ENCODE measurements at regions of chr6 and their contacts with region 1.

Region 1: DNA sequence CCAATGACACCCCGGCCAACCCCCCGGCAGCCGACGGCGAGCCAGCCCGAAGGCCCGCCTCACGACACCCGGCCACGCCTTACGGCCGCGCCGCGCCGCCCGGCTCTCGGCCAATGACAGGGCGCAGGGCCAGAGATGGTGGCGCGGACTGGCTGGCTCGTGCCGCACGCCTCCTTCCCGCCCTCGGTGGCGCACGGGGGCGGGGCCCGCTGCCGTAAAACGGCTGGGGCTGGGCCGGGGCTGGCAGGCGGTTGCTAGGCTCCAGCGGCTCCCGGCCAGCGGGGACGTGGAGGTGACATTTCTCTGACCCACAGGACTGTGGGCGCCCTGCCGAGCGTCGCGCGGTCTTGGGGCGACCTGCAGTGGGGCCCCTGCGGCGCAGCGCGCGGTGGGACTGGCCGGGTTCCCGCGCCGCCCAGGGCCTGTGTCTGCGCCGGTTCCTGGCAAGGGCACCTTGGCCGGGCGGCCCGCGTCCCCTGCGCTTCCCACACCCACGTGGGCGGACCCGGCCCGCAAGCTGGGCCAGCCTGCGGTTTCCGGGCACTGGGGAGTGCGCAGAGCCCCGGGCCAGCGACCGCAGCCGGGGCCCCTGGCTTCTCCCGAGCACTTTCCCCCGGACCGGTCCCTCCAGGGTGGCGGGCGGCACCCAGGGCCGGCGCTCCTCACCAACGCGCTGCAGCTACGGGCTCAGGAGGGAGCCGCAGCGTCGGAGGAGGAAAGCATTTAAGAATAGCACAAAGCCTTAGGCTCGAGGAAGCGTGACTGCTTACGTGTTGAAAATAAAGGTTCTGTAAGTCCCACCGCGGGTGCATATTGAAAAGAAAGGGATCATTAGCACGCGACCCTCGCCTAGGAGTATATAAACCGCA is at the start of gene MPC1:
- DNase-seq: peak; percentile 75
- H3K4me3 ChIP-seq: peak within 1 kb of the TSS; percentile 68 to 91 (median 80)
- H3K27ac ChIP-seq: peak within 1 kb of the TSS; percentile 90 to 96 (median 92)
- H3K4me1 ChIP-seq: peaks cover 4 to 16% (median 10%) of the 10 kb centered on the region in 3 donors
- H3K27me3 ChIP-seq: no peaks in the 10 kb centered on the region
- CTCF ChIP-seq: no peak
- POLR2A ChIP-seq: peak in 3 of 4 donors; percentile 30 to 83 (median 71)
- total RNA-seq, gene MPC1: 43.1 to 64.3 (median 59.5) TPM

Region 2: DNA sequence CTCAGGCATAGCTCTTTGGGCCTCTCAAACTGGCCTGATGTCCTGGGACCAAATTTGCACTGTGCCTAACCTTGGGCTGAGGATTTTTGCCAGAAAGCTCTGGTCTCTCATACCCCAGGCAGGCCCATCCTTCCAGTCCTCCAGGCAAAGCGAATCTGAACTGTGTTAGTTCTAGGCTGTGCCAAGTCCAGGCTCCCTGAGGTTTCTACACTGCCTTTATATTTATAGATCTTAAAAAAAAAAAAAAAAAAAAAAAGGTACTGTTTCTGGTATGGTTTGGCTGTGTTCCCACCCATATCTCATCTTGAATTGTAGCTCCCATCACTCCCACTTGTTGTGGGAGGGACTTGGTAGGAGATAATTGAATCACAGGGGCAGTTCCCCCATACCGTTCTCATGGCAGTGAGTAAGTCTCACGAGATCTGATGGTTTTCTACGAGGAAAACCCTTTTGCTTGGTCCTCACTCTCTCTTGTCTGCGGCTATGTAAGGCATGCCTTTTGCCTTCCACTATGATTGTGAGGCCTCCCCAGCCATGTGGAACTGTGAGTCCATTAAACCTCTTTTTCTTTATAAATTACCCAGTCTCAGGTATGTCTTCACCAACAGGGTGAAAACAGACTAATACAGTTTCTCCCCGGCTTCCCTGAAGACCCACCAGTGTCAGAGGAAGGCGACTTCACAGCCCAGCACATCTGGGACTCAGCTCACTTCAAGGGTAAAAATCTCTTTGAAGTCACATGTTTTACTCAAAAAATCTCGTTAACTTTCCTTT is 176.5 kb before region 1 on chr6:
- intact Hi-C with region 1: no loop called
- DNase-seq: no peak
- H3K4me3 ChIP-seq: no peak overlapping the region
- H3K27ac ChIP-seq: no peak overlapping the region
- H3K4me1 ChIP-seq: no peaks in the 10 kb centered on the region
- H3K27me3 ChIP-seq: no peaks in the 10 kb centered on the region
- CTCF ChIP-seq: no peak
- POLR2A ChIP-seq: no peak

Region 3: GRCh38 chr6:166253281-166253681 is 129.9 kb before region 1 on chr6:
- intact Hi-C with region 1: no loop called
- DNase-seq: no peak
- H3K4me3 ChIP-seq: peak overlapping the region; percentile 12 to 58 (median 38)
- H3K27ac ChIP-seq: peak overlapping the region in 2 of 4 donors; percentile 2 to 44
- H3K4me1 ChIP-seq: peaks cover 6 to 13% (median 9%) of the 10 kb centered on the region in 3 donors
- H3K27me3 ChIP-seq: peaks cover 0 to 75% (median 12%) of the 10 kb centered on the region in 4 donors
- CTCF ChIP-seq: no peak
- POLR2A ChIP-seq: no peak

Region 4: DNA sequence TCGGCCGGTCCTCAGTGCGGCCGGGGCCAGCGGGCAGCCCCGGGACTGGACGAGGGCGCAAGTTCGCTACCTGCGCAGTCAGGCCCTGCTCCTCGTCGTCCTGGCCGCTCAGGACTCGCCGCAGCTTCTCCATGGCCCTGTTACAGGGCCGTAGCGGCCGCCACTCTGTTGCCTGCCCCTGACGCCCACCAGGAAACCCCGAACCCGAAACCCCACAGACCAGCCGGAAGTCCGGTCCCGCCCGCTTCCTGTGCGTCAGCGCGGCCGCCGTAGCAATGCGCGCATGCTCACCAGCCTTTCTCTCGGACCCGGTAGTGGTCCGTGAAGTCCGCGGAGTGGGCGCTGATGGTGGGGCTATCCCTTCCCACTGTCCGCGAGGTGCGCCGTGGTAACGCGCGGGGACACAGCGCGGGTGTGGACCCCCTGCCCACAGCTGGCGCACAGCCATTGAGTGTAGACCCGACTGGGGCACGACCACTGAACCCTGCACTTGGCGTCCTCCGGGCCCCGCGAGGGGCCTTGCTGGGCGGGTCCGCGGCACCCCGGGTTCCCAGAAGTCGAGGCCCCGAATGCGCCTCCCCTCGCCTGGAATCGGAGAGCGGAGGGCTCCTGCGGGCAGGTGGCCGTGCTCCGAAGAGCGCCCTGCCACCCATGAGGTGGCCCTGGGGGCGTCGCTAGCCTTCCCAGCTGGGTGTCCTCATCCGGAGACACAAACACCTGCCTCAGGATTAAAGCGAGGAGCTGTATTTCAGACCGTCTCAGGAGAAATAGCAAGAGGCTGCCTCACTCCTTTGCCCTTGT is 40.6 kb before region 1 on chr6 and contains the start of gene SFT2D1:
- intact Hi-C with region 1: loop called (anchors 5 kb)
- DNase-seq: peak; percentile 38
- H3K4me3 ChIP-seq: peak within 1 kb of the TSS; percentile 89 to 98 (median 96)
- H3K27ac ChIP-seq: peak within 1 kb of the TSS; percentile 94 to 98 (median 96)
- H3K4me1 ChIP-seq: peaks cover 25 to 49% (median 28%) of the 10 kb centered on the region in 3 donors
- H3K27me3 ChIP-seq: no peaks in the 10 kb centered on the region
- CTCF ChIP-seq: peak in 1 of 6 experiments; percentile 21
- POLR2A ChIP-seq: peak in 3 of 4 donors; percentile 76 to 96 (median 89)
- total RNA-seq, gene SFT2D1: 34.8 to 45.3 (median 37.1) TPM

Region 5: GRCh38 chr6:166466178-166467122 is 83.3 kb after region 1 on chr6:
- intact Hi-C with region 1: no loop called
- DNase-seq: no peak
- H3K4me3 ChIP-seq: no peak overlapping the region
- H3K27ac ChIP-seq: peak overlapping the region in 3 of 4 donors; percentile 40 to 48 (median 45)
- H3K4me1 ChIP-seq: peaks cover 0 to 36% (median 3%) of the 10 kb centered on the region in 3 donors
- H3K27me3 ChIP-seq: peaks cover 0 to 23% (median 0%) of the 10 kb centered on the region in 4 donors
- CTCF ChIP-seq: no peak
- POLR2A ChIP-seq: no peak

Region 6: DNA sequence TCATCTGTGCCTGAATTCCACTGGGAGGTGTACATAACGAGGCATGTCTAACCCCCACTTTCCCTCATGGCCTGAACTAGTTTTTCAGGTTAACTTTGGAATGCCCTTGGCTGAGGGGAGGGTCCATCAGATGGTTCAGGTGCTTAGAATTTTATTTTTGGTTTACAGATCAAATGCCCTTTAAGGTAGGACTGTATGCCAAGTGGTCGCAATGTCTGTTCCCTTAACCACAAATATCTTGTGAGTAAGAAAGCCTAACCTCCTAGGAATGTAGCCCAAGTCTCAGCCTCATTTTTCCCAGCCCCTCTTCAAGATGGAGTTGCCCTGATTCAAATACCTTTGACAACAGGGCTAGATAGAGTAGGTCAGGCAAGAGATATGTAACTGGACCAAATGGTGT is 494.7 kb after region 1 on chr6:
- intact Hi-C with region 1: no loop called
- DNase-seq: no peak
- H3K4me3 ChIP-seq: no peak overlapping the region
- H3K27ac ChIP-seq: no peak overlapping the region
- H3K4me1 ChIP-seq: no peaks in the 10 kb centered on the region
- H3K27me3 ChIP-seq: peaks cover 0 to 3% (median 0%) of the 10 kb centered on the region in 4 donors
- CTCF ChIP-seq: no peak
- POLR2A ChIP-seq: no peak

Measured in esophagus squamous epithelium (tissue), 5 donors.